ENCODE measurements at regions of chr5 and their contacts with region 1.

Region 1: GRCh38 chr5:149381987-149382340 is 2.9 kb upstream of the IL17B start:
- DNase-seq: peak; percentile 70 to 73 (median 71)
- ATAC-seq: peak; percentile 79 to 90 (median 86)
- H3K4me3 ChIP-seq: no peak overlapping the region
- H3K27ac ChIP-seq: peak overlapping the region in 1 of 3 donors; percentile 3
- H3K4me1 ChIP-seq: no peaks in the 10 kb centered on the region
- H3K27me3 ChIP-seq: no peaks in the 10 kb centered on the region
- CTCF ChIP-seq: peak; percentile 79 to 89 (median 84)
- POLR2A ChIP-seq: no peak

Region 2: DNA sequence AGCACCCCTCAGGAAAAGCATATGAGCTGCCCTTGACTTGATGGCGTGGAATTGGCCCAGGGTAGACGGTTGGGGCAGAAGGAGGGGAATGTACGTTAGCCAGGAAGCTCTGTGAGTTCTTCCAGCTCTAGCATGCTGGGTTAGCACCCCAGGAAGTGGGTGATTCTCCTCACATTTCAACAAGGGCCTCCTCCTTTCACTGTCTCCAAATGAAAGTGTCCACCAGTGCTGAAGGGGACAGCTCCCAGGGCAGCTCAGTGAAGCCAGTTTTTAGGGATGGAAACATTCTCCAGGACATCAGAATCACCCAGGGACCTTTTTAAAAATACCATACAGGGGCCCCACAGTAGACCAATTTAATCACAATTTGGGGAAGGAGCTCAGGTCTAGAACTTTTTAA is 127.5 kb before region 1 on chr5:
- intact Hi-C with region 1: no loop called
- DNase-seq: no peak
- ATAC-seq: peak in 1 of 4 donors; percentile 5
- H3K4me3 ChIP-seq: no peak overlapping the region
- H3K27ac ChIP-seq: no peak overlapping the region
- H3K4me1 ChIP-seq: no peaks in the 10 kb centered on the region
- H3K27me3 ChIP-seq: no peaks in the 10 kb centered on the region
- CTCF ChIP-seq: no peak
- POLR2A ChIP-seq: no peak

Region 3: DNA sequence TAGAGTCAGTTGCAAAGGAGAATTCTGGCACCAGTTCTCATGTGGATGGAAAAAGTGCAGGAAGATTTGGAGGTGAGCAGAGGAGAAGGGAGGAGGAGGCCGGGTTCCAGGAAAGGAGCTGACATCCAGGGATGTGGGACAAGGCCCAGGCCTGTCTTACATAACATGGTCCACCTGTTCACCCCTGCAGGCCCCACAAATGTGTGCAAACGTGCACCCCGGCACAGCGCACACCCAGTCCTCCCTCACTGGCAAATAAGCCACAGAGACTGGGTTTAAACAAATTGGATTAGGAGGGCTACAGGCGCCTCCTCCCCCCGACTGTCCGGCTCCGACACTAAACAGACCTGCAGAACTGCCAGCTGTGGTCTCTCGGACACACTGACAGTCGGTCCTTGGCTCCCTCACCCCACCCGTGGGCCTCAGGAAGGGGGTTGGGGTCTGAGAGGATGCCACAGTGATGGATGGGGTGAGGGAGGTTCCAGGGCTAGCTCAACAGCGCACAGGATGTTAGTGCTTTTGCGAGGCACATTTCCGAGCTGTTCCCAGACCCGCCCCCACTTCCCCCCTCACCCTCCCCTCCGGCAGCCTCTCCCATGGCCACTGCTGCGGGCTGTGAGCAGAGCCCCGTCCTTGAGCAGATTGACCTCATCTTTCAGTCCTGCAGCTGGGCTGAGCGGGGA is 40.5 kb after region 1 on chr5:
- intact Hi-C with region 1: loop called in 1 of 2 experiments (anchors 5 kb)
- DNase-seq: peak in 1 of 3 donors; percentile 48
- ATAC-seq: peak; percentile 64 to 74 (median 70)
- H3K4me3 ChIP-seq: no peak overlapping the region
- H3K27ac ChIP-seq: peak overlapping the region in 1 of 3 donors; percentile 48
- H3K4me1 ChIP-seq: no peaks in the 10 kb centered on the region
- H3K27me3 ChIP-seq: no peaks in the 10 kb centered on the region
- CTCF ChIP-seq: no peak
- POLR2A ChIP-seq: no peak

Measured in right lobe of liver (tissue), 6 donors.